GM12878 (cell line): ENCODE measurements at regions of chr10 and their contacts with region 1.

Region 1: GRCh38 chr10:92742331-92743228 is 52.8 kb downstream of the HHEX start:
- DNase-seq: peak; percentile 81
- ATAC-seq: peak; percentile 98
- H3K4me3 ChIP-seq: no peak overlapping the region
- H3K27ac ChIP-seq: peak overlapping the region; percentile 62
- H3K4me1 ChIP-seq: peaks cover 35% of the 10 kb centered on the region
- H3K27me3 ChIP-seq: no peaks in the 10 kb centered on the region; a peak in 1 of 4 replicates
- CTCF ChIP-seq: no peak
- EP300 ChIP-seq: peak; percentile 92 to 99
- POLR2A ChIP-seq: no peak
- RAD21 ChIP-seq: no peak

Region 2: DNA sequence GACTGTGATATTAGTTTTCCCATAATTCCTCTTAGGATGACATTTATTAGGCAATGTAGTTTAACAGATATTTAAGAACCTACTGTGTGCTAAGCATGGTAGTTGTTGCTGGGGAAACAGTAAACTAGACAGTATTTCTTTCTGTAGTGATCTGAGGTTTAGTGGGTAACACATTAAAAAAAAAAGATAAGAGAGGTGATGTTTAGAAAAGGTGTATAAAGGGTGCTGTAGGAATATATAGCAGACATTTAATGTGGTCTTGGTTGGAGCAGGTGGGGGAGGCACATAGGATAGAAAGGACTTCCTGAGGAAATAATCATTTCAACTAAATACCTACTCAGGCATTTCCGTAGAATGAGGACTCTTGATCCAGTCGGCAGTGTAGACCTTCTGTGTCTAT is 137.7 kb before region 1 on chr10:
- CTCF ChIA-PET with region 1: no interaction called
- POLR2A ChIA-PET with region 1: no interaction called
- RAD21 ChIA-PET with region 1: no interaction called
- SMC1A ChIA-PET with region 1: no interaction called
- in situ Hi-C with region 1: no loop called
- intact Hi-C with region 1: loop called (anchors 5 kb)
- DNase-seq: no peak
- ATAC-seq: no peak
- H3K4me3 ChIP-seq: no peak overlapping the region
- H3K27ac ChIP-seq: no peak overlapping the region
- H3K4me1 ChIP-seq: no peaks in the 10 kb centered on the region; the same call in 1 of the 2 replicates
- H3K27me3 ChIP-seq: no peaks in the 10 kb centered on the region
- CTCF ChIP-seq: no peak
- EP300 ChIP-seq: no peak
- POLR2A ChIP-seq: no peak
- RAD21 ChIP-seq: no peak

Region 3: DNA sequence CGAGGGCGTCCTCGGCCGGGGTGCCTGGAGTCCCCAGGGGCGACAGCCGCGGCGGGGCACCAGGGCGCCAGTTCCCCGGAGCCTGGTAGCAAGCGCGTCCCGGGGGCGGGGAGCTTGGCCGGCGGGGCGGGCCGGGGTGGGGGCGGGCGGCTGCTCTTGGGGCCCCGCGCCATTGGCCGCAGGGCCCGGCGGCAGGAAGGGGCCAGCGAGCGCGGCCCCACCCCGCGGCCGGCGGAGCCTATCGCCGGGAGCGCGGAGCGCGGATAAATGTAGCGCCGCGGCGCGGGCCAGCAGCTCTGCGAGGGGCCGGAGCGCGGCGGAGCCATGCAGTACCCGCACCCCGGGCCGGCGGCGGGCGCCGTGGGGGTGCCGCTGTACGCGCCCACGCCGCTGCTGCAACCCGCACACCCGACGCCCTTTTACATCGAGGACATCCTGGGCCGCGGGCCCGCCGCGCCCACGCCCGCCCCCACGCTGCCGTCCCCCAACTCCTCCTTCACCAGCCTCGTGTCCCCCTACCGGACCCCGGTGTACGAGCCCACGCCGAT is 52.8 kb before region 1 on chr10 and contains the start of gene HHEX:
- CTCF ChIA-PET with region 1: interaction called, 3 read pairs
- POLR2A ChIA-PET with region 1: no interaction called
- RAD21 ChIA-PET with region 1: interaction called, 3 read pairs
- SMC1A ChIA-PET with region 1: no interaction called
- in situ Hi-C with region 1: no loop called
- intact Hi-C with region 1: loop called (anchors 5 kb)
- DNase-seq: no peak
- ATAC-seq: peak; percentile 78
- H3K4me3 ChIP-seq: peak within 1 kb of the TSS; percentile 70
- H3K27ac ChIP-seq: no peak within 1 kb of the TSS
- H3K4me1 ChIP-seq: peaks cover 16% of the 10 kb centered on the region
- H3K27me3 ChIP-seq: peaks cover 0 to 28% of the 10 kb centered on the region in 2 experiments; a peak in 3 of 4 replicates
- CTCF ChIP-seq: no peak
- EP300 ChIP-seq: no peak
- POLR2A ChIP-seq: 0 out of 2 replicates have a peak, but pooled peaks have one; percentile 53
- RAD21 ChIP-seq: no peak
- polyA plus RNA-seq, gene HHEX: 8.6 to 11.9 TPM

Region 4: DNA sequence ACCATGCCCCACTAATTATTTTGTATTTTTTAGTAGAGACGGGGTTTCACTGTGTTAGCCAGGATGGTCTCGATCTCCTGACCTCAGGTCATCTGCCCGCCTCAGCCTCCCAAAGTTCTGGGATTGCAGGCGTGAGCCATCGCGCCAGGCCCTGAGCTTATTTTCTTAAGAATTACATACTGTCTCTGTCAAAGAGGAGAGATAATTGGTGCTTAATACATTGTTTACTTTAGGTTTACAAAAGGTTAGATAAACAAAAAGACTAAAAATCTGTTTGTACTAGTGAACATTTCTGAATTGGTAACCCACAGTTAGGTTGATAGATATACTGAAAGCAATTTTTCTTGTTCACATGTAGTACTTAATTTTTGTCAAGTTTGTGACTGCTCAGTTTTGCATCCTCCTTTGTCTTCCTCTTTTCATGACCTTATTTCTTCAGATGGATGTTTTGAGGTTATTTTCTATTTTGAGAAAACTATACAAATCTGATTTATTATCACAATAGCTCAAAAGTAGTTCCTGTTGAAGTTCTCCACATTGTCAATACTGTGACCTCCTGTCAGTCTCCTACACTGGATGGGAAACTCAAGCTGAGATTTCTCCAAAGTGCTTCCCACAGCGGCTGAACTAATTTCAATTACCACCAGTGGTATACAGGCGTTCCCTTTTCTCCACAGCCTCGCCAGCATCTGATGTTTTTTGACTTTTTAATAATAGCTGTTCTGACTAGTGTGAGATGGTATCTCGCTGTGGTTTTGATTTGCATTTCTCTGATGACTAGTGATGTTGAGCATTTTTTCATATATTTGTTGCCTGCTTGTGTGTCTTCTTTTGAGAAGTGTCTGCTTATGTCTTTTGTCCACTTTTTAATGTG is 30.3 kb before region 1 on chr10:
- CTCF ChIA-PET with region 1: no interaction called
- POLR2A ChIA-PET with region 1: no interaction called
- RAD21 ChIA-PET with region 1: no interaction called
- SMC1A ChIA-PET with region 1: interaction called, 12 read pairs
- in situ Hi-C with region 1: no loop called
- intact Hi-C with region 1: no loop called
- DNase-seq: peak; percentile 16
- ATAC-seq: peak; percentile 75
- H3K4me3 ChIP-seq: no peak overlapping the region
- H3K27ac ChIP-seq: no peak overlapping the region
- H3K4me1 ChIP-seq: peaks cover 9% of the 10 kb centered on the region; the same call in 1 of the 2 replicates
- H3K27me3 ChIP-seq: no peaks in the 10 kb centered on the region
- CTCF ChIP-seq: no peak
- EP300 ChIP-seq: no peak
- POLR2A ChIP-seq: no peak
- RAD21 ChIP-seq: no peak

Region 5: GRCh38 chr10:92729886-92730285 is 12.7 kb before region 1 on chr10:
- CTCF ChIA-PET with region 1: interaction called, 4 read pairs
- POLR2A ChIA-PET with region 1: interaction called, 3 read pairs
- RAD21 ChIA-PET with region 1: interaction called, 4 read pairs
- SMC1A ChIA-PET with region 1: interaction called, 5 read pairs
- in situ Hi-C with region 1: no loop called
- intact Hi-C with region 1: loop called (anchors 1 kb)
- DNase-seq: peak; percentile 35
- ATAC-seq: peak; percentile 95
- H3K4me3 ChIP-seq: 0 out of 2 replicates have a peak overlapping the region, but pooled peaks have one; percentile 10
- H3K27ac ChIP-seq: no peak overlapping the region
- H3K4me1 ChIP-seq: peaks cover 16% of the 10 kb centered on the region
- H3K27me3 ChIP-seq: peaks cover 0 to 5% of the 10 kb centered on the region in 2 experiments; a peak in 2 of 4 replicates
- CTCF ChIP-seq: no peak
- EP300 ChIP-seq: peak in 1 of 2 experiments; percentile 6; a peak in 1 of 4 replicates
- POLR2A ChIP-seq: no peak
- RAD21 ChIP-seq: peak; percentile 19; the same call in 1 of the 2 replicates